ENCODE measurements at regions of chr13 and their contacts with region 1.

Region 1: GRCh38 chr13:52128714-52129700 is at the start of gene NEK5:
- DNase-seq: peak; percentile 68
- H3K4me3 Mint-ChIP-seq: peak within 1 kb of the TSS; percentile 70
- H3K27ac Mint-ChIP-seq: no peak within 1 kb of the TSS
- H3K4me1 Mint-ChIP-seq: peaks cover 12% of the 10 kb centered on the region
- H3K27me3 Mint-ChIP-seq: peaks cover 2% of the 10 kb centered on the region
- total RNA-seq, gene NEK5: 0.10 to 0.14 TPM

Region 2: GRCh38 chr13:51814825-51815650 is 314.0 kb before region 1 on chr13:
- CTCF ChIA-PET with region 1: interaction called, 39 read pairs
- intact Hi-C with region 1: loop called (anchors 1 kb)
- DNase-seq: peak; percentile 89
- H3K4me3 Mint-ChIP-seq: peak overlapping the region; percentile 62
- H3K27ac Mint-ChIP-seq: peak overlapping the region; percentile 87
- H3K4me1 Mint-ChIP-seq: peaks cover 86% of the 10 kb centered on the region
- H3K27me3 Mint-ChIP-seq: no peaks in the 10 kb centered on the region

Region 3: GRCh38 chr13:51844862-51845573 is 284.0 kb before region 1 on chr13 and contains the start of gene TMEM272:
- CTCF ChIA-PET with region 1: interaction called, 9 read pairs
- intact Hi-C with region 1: loop called (anchors 1 kb)
- DNase-seq: peak; percentile 63
- H3K4me3 Mint-ChIP-seq: peak within 1 kb of the TSS; percentile 47
- H3K27ac Mint-ChIP-seq: no peak within 1 kb of the TSS
- H3K4me1 Mint-ChIP-seq: peaks cover 17% of the 10 kb centered on the region
- H3K27me3 Mint-ChIP-seq: peaks cover 6% of the 10 kb centered on the region
- total RNA-seq, gene TMEM272: 0.41 to 0.42 TPM

Region 4: GRCh38 chr13:52001120-52001731 is 127.8 kb before region 1 on chr13:
- CTCF ChIA-PET with region 1: interaction called, 55 read pairs
- intact Hi-C with region 1: loop called (anchors 1 kb)
- DNase-seq: no peak
- H3K4me3 Mint-ChIP-seq: no peak overlapping the region
- H3K27ac Mint-ChIP-seq: no peak overlapping the region
- H3K4me1 Mint-ChIP-seq: no peaks in the 10 kb centered on the region
- H3K27me3 Mint-ChIP-seq: no peaks in the 10 kb centered on the region

Region 5: GRCh38 chr13:52070929-52071523 is 58.0 kb before region 1 on chr13:
- CTCF ChIA-PET with region 1: interaction called, 3 read pairs
- intact Hi-C with region 1: loop called (anchors 1 kb)
- DNase-seq: peak; percentile 73
- H3K4me3 Mint-ChIP-seq: no peak overlapping the region
- H3K27ac Mint-ChIP-seq: no peak overlapping the region
- H3K4me1 Mint-ChIP-seq: peaks cover 11% of the 10 kb centered on the region
- H3K27me3 Mint-ChIP-seq: peaks cover 16% of the 10 kb centered on the region

Region 6: DNA sequence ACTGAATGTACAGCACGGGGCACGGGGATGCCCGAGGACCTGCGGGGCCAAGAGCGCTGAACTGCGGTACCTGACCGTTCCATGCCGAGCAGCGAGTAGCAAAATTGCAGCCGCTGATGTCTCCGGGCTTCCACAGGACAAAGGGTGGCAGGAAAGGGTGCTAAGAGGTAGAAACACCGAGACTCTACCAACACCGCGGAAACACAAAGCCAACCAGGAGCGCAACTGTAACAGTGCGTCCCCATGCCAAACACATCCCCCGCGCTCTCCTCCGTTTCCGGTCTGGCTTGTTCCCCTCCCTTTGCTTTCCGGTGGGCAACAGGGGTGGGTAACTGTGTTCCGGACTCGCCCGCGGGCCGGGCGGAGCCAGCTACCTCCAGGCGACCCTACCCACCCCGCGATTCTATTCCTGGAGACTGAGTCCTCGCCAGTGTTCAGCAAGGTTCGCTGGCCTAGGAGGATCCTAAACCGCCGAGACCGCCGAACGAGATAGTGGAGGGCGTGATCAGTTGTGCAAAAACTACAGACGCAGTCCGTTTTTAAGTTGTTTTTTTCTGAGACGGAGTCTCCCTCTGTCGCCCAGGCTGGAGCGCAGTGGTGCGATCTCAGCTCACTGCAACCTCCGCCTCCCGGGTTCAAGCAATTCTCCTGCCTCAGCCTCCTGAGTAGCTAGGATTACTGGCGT is 65.3 kb after region 1 on chr13:
- CTCF ChIA-PET with region 1: interaction called, 4 read pairs
- intact Hi-C with region 1: loop called (anchors 2 kb)
- DNase-seq: peak; percentile 90
- H3K4me3 Mint-ChIP-seq: peak overlapping the region; percentile 98
- H3K27ac Mint-ChIP-seq: peak overlapping the region; percentile 97
- H3K4me1 Mint-ChIP-seq: peaks cover 30% of the 10 kb centered on the region
- H3K27me3 Mint-ChIP-seq: no peaks in the 10 kb centered on the region

Measured in activated naive CD4-positive, alpha-beta T cell treated with anti-CD3 and anti-CD28 coated beads for 36 hours (primary cell).